B cell (primary cell): ENCODE measurements at regions of chr19 and their contacts with region 1.

Region 1: GRCh38 chr19:43519436-43520088 is 7.4 kb downstream of the ETHE1 start:
- DNase-seq: peak; percentile 87
- ATAC-seq: peak; percentile 59
- H3K4me3 ChIP-seq: no peak overlapping the region
- H3K4me3 Mint-ChIP-seq: peak overlapping the region; percentile 57
- H3K27ac ChIP-seq: no peak overlapping the region
- H3K27ac Mint-ChIP-seq: peak overlapping the region; percentile 87
- H3K4me1 ChIP-seq: peaks cover 15 to 23% of the 10 kb centered on the region in 2 donors
- H3K4me1 Mint-ChIP-seq: peaks cover 17% of the 10 kb centered on the region
- H3K27me3 ChIP-seq: no peaks in the 10 kb centered on the region
- H3K27me3 Mint-ChIP-seq: no peaks in the 10 kb centered on the region
- CTCF ChIP-seq: peak; percentile 93

Region 2: DNA sequence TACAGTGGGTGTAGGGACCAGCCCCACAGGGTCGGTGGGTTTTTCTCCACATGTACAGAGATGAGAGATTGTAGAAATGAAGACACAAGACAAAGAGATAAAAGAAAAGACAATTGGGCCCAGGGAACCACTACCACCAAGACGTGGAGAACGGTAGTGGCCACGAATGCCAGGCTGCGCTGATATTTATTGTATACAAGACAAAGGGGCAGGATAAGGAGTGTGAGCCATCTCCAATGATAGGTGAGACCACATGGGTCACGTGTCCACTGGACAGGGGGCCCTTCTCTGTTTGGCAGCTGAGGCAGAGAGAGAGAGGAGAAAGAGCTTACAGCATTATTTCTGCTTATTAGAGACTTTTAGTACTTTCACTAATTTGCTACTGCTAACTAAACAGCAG is 328.4 kb before region 1 on chr19:
- CTCF ChIA-PET with region 1: no interaction called
- POLR2A ChIA-PET with region 1: no interaction called
- intact Hi-C with region 1: loop called (anchors 10 kb)
- DNase-seq: no peak
- ATAC-seq: no peak
- H3K4me3 ChIP-seq: no peak overlapping the region
- H3K4me3 Mint-ChIP-seq: no peak overlapping the region
- H3K27ac ChIP-seq: no peak overlapping the region
- H3K27ac Mint-ChIP-seq: no peak overlapping the region
- H3K4me1 ChIP-seq: no peaks in the 10 kb centered on the region
- H3K4me1 Mint-ChIP-seq: no peaks in the 10 kb centered on the region
- H3K27me3 ChIP-seq: no peaks in the 10 kb centered on the region
- H3K27me3 Mint-ChIP-seq: peaks cover 27% of the 10 kb centered on the region
- CTCF ChIP-seq: no peak

Region 3: GRCh38 chr19:43337737-43338136 is 181.8 kb before region 1 on chr19:
- CTCF ChIA-PET with region 1: no interaction called
- POLR2A ChIA-PET with region 1: no interaction called
- intact Hi-C with region 1: no loop called
- DNase-seq: no peak
- ATAC-seq: no peak
- H3K4me3 ChIP-seq: no peak overlapping the region
- H3K4me3 Mint-ChIP-seq: no peak overlapping the region
- H3K27ac ChIP-seq: no peak overlapping the region
- H3K27ac Mint-ChIP-seq: no peak overlapping the region
- H3K4me1 ChIP-seq: no peaks in the 10 kb centered on the region
- H3K4me1 Mint-ChIP-seq: no peaks in the 10 kb centered on the region
- H3K27me3 ChIP-seq: no peaks in the 10 kb centered on the region
- H3K27me3 Mint-ChIP-seq: peaks cover 18% of the 10 kb centered on the region
- CTCF ChIP-seq: no peak

Region 4: GRCh38 chr19:43438291-43439096 is 81.1 kb before region 1 on chr19:
- CTCF ChIA-PET with region 1: interaction called, 644 read pairs
- POLR2A ChIA-PET with region 1: interaction called, 14 read pairs
- intact Hi-C with region 1: loop called (anchors 1 kb)
- DNase-seq: no peak
- ATAC-seq: no peak
- H3K4me3 ChIP-seq: peak overlapping the region in 1 of 5 experiments; percentile 34
- H3K4me3 Mint-ChIP-seq: peak overlapping the region; percentile 57
- H3K27ac ChIP-seq: peak overlapping the region; percentile 6 to 77
- H3K27ac Mint-ChIP-seq: peak overlapping the region; percentile 83
- H3K4me1 ChIP-seq: peaks cover 22 to 28% of the 10 kb centered on the region in 2 donors
- H3K4me1 Mint-ChIP-seq: peaks cover 29% of the 10 kb centered on the region
- H3K27me3 ChIP-seq: no peaks in the 10 kb centered on the region
- H3K27me3 Mint-ChIP-seq: no peaks in the 10 kb centered on the region
- CTCF ChIP-seq: no peak

Region 5: GRCh38 chr19:43474986-43475705 is 44.4 kb before region 1 on chr19:
- CTCF ChIA-PET with region 1: interaction called, 5 read pairs
- POLR2A ChIA-PET with region 1: no interaction called
- intact Hi-C with region 1: loop called (anchors 5 kb)
- DNase-seq: peak; percentile 98
- ATAC-seq: peak; percentile 98
- H3K4me3 ChIP-seq: peak overlapping the region; percentile 45 to 66 (median 52)
- H3K4me3 Mint-ChIP-seq: peak overlapping the region; percentile 90
- H3K27ac ChIP-seq: peak overlapping the region; percentile 50 to 84
- H3K27ac Mint-ChIP-seq: peak overlapping the region; percentile 92
- H3K4me1 ChIP-seq: peaks cover 4 to 13% of the 10 kb centered on the region in 2 donors
- H3K4me1 Mint-ChIP-seq: peaks cover 13% of the 10 kb centered on the region
- H3K27me3 ChIP-seq: no peaks in the 10 kb centered on the region
- H3K27me3 Mint-ChIP-seq: no peaks in the 10 kb centered on the region
- CTCF ChIP-seq: no peak

Region 6: DNA sequence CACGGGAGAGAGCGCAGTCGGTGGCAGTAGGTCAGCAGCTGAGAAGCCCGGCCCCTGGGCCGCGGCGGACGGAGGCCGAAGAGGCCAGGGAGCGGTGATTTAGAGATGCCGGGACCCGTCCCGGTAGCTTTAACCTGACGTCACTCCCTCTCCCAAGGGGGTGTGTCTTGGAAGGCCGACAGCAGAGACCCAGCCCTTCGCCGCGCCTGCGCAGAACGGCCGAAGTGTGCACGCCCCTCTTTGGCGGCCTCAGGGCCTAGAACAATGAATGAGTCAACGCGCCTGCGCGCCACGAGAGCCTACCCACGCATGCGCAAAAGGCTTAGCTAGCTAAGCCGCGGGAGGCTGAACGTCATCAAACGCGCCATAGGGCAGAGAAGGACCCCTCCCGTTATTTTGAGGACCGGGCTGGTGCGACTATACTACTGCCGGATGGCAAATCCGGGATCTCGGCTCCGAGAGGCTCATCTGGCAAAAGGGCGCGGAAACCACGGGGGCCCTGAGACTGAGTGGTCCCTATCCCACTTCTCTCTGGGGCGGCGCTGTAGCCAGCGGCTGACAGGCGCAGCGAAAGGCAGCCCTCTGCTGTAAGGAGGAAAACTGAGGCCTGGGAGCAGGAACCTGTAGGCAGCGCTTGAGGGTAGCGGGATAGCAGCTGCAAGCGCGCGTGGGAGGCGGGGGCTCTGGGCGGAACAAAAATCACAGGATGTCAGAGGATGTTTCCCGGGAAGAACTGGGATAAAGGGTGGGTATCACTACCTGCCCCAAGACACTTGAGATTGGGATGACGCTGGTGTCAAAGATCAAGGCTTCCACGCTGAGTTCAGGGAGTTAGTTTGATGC is 76.7 kb after region 1 on chr19 and contains the starts of genes IRGQ and ZNF576:
- CTCF ChIA-PET with region 1: interaction called, 22 read pairs
- POLR2A ChIA-PET with region 1: no interaction called
- intact Hi-C with region 1: no loop called
- DNase-seq: peak; percentile 100
- ATAC-seq: peak; percentile 88
- H3K4me3 ChIP-seq: peak within 1 kb of the TSS; percentile 61 to 88 (median 73)
- H3K4me3 Mint-ChIP-seq: peak within 1 kb of the TSS; percentile 98
- H3K27ac ChIP-seq: peak within 1 kb of the TSS; percentile 95 to 97
- H3K27ac Mint-ChIP-seq: peak within 1 kb of the TSS; percentile 99
- H3K4me1 ChIP-seq: peaks cover 16 to 38% of the 10 kb centered on the region in 2 donors
- H3K4me1 Mint-ChIP-seq: peaks cover 43% of the 10 kb centered on the region
- H3K27me3 ChIP-seq: no peaks in the 10 kb centered on the region
- H3K27me3 Mint-ChIP-seq: no peaks in the 10 kb centered on the region
- CTCF ChIP-seq: no peak
- total RNA-seq, gene IRGQ: 20.3 and 20.5 TPM in 2 replicates
- total RNA-seq, gene ZNF576: 17.3 and 23.2 TPM in 2 replicates

Region 7: GRCh38 chr19:43809762-43810696 is 290.5 kb after region 1 on chr19:
- CTCF ChIA-PET with region 1: interaction called, 10 read pairs
- POLR2A ChIA-PET with region 1: no interaction called
- intact Hi-C with region 1: no loop called
- DNase-seq: peak; percentile 70
- ATAC-seq: peak; percentile 39
- H3K4me3 ChIP-seq: no peak overlapping the region
- H3K4me3 Mint-ChIP-seq: no peak overlapping the region
- H3K27ac ChIP-seq: no peak overlapping the region
- H3K27ac Mint-ChIP-seq: no peak overlapping the region
- H3K4me1 ChIP-seq: no peaks in the 10 kb centered on the region
- H3K4me1 Mint-ChIP-seq: no peaks in the 10 kb centered on the region
- H3K27me3 ChIP-seq: peaks cover 0 to 6% (median 1%) of the 10 kb centered on the region in 4 experiments
- H3K27me3 Mint-ChIP-seq: peaks cover 37% of the 10 kb centered on the region
- CTCF ChIP-seq: peak; percentile 83